Transverse colon (tissue), 4 donors: ENCODE measurements at regions of chr10 and their contacts with region 1.

Region 1: DNA sequence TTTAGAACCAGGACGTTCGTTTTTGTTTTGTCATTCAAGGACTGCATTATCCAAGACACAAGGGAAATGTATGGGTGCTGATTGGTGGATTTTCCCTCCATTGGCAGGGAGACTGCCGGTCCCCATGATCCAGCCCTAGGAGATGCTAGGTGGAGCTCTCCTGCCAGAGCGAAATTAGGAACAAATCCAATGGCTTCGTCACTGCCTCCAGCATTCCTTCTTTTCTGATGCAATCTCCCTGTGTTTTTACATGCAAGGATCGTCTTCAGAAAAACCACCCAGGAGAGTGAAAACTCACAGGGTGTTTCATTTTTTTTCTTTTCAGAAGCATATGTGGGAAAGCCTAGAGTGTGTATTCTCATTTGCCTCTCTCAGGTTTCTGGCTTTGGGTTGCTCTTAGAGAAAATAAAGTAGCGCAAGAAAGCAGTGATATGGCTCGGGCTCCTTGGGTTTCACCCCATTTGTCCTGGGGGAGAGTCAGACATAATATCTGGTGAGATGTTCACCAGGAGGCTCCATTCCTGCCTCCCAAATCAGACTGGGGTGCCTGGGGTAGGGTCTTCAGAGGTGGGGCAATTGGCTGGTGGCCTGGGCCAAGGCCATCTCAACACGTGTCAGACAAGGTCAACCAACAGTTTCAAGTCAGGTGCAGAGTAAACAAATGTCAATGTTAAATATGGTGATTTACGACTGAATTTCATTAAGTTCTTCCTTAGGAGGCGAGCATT is 450.9 kb upstream of the MKI67 start:
- DNase-seq: no peak
- H3K4me3 ChIP-seq: no peak overlapping the region
- H3K27ac ChIP-seq: no peak overlapping the region
- H3K4me1 ChIP-seq: no peaks in the 10 kb centered on the region
- H3K27me3 ChIP-seq: peaks cover 2% of the 10 kb centered on the region
- CTCF ChIP-seq: no peak
- EP300 ChIP-seq: no peak
- POLR2A ChIP-seq: no peak

Region 2: GRCh38 chr10:128695931-128696330 is 118.8 kb after region 1 on chr10:
- in situ Hi-C with region 1: no loop called
- intact Hi-C with region 1: loop called (anchors 2 kb)
- DNase-seq: no peak
- H3K4me3 ChIP-seq: no peak overlapping the region
- H3K27ac ChIP-seq: no peak overlapping the region
- H3K4me1 ChIP-seq: no peaks in the 10 kb centered on the region
- H3K27me3 ChIP-seq: no peaks in the 10 kb centered on the region
- CTCF ChIP-seq: no peak
- EP300 ChIP-seq: no peak
- POLR2A ChIP-seq: no peak

Region 3: GRCh38 chr10:128908099-128908498 is 331.0 kb after region 1 on chr10:
- in situ Hi-C with region 1: no loop called
- intact Hi-C with region 1: no loop called
- DNase-seq: no peak
- H3K4me3 ChIP-seq: no peak overlapping the region
- H3K27ac ChIP-seq: no peak overlapping the region
- H3K4me1 ChIP-seq: no peaks in the 10 kb centered on the region
- H3K27me3 ChIP-seq: no peaks in the 10 kb centered on the region
- CTCF ChIP-seq: no peak
- EP300 ChIP-seq: no peak
- POLR2A ChIP-seq: no peak

Region 4: DNA sequence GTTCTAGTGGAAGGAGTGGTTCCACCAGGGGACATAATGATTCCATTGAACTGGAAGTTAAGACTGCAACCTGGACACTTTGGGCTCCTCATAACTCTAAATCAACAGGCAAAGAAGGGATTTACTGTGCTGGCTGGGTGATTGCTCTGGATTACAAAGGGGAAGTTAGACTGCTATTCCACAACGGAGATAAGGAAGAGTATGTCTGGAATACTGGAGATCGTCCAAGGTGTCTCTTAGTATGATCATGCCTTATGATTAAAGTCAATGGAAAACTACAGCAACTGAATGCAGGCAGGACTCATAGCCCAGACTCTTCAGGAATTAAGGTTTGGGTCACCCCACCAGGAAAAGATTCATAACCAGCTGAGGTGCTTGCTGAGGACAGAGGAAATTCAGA is 579.3 kb after region 1 on chr10:
- in situ Hi-C with region 1: no loop called
- intact Hi-C with region 1: no loop called
- DNase-seq: no peak
- H3K4me3 ChIP-seq: no peak overlapping the region
- H3K27ac ChIP-seq: no peak overlapping the region
- H3K4me1 ChIP-seq: no peaks in the 10 kb centered on the region
- H3K27me3 ChIP-seq: no peaks in the 10 kb centered on the region
- CTCF ChIP-seq: no peak
- EP300 ChIP-seq: no peak
- POLR2A ChIP-seq: no peak